ENCODE measurements at regions of chr5 and their contacts with region 1.

Region 1: GRCh38 chr5:59380350-59380951 is 513.1 kb downstream of the PDE4D start:
- DNase-seq: peak in 2 of 3 donors; percentile 32 to 46
- H3K4me3 ChIP-seq: no peak overlapping the region
- H3K4me3 Mint-ChIP-seq: no peak overlapping the region
- H3K27ac ChIP-seq: no peak overlapping the region
- H3K27ac Mint-ChIP-seq: no peak overlapping the region
- H3K4me1 ChIP-seq: no peaks in the 10 kb centered on the region
- H3K4me1 Mint-ChIP-seq: peaks cover 3% of the 10 kb centered on the region
- H3K27me3 ChIP-seq: no peaks in the 10 kb centered on the region
- H3K27me3 Mint-ChIP-seq: no peaks in the 10 kb centered on the region
- CTCF ChIP-seq: peak; percentile 59

Region 2: DNA sequence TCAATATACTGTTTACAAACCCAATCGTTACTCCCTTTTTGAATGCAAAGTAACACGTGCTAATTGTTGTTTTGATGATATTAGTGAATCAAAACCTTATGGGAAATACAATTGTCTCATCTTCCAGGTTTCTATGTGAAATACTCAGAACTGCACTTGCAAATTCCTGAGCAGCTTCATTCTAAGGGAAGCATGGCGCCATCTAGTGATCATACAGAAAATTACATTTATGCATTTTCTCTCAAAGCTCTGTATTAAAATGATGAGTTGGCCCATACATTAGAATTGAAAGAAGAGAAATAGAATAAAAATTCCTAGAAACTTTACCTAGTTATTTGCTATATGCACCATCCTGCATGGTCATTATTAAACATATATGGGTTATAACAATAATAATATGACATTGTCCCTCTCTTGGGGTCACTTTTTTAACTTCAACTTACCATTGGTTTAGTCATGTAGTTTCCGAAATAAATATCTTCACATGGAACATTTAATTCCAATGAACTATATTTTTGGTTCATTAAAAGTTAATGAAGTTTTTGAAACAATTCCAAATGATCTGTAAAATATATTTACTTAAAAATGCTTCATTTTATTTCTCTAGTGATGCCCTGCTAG is 293.1 kb after region 1 on chr5:
- intact Hi-C with region 1: loop called in 1 of 2 experiments (anchors 10 kb)
- DNase-seq: peak; percentile 16 to 46 (median 31)
- H3K4me3 ChIP-seq: no peak overlapping the region
- H3K4me3 Mint-ChIP-seq: no peak overlapping the region
- H3K27ac ChIP-seq: no peak overlapping the region
- H3K27ac Mint-ChIP-seq: no peak overlapping the region
- H3K4me1 ChIP-seq: no peaks in the 10 kb centered on the region
- H3K4me1 Mint-ChIP-seq: no peaks in the 10 kb centered on the region
- H3K27me3 ChIP-seq: no peaks in the 10 kb centered on the region
- H3K27me3 Mint-ChIP-seq: peaks cover 0 to 3% (median 1%) of the 10 kb centered on the region in 3 donors
- CTCF ChIP-seq: peak; percentile 94

Measured in CD14-positive monocyte (primary cell).